Esophagus muscularis mucosa (tissue), 4 donors: ENCODE measurements at regions of chr1 and their contacts with region 1.

Region 1: DNA sequence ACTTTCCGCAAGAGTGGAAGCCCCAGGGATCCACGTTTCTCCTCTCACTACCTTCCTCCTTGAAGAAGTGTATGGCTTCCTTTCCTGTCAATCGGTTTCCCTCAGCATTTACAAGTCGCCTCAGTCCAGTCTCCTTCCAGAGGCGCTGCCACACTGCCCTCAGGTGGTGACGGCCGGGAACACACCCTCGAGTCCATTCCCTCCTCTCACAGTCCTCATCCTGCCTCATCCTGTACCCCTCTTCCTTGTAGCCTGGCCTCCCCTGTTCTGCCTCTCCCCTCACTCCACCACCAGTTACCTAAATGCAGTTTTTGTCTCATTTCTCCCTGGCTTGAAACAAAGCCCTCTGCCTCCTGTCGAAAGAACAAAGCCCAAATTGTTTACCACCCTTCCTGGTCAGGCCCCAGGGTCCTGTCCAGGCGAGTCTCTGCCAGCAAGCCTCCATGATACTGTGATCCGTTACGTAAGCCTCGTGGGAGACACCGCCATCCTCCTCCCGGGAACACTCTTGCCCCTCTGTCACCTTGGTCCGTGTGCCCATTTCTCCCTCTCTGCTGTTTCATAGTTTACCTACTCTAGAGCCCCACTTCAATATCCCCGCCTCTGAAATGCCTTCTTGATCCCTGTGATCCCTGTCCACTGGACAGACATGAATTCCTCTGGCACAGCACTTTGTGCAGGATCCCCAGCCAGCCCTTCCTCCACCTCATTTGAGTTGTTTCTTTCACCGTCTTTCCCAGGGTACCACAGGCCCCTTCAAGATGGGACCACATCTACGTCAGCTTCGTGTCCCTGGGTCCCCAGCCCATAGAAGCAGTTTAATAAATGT is 23.3 kb upstream of the LSM10 start:
- DNase-seq: peak; percentile 97
- H3K4me3 ChIP-seq: no peak overlapping the region
- H3K27ac ChIP-seq: peak overlapping the region in 2 of 4 donors; percentile 9 to 13
- H3K4me1 ChIP-seq: peaks cover 0 to 14% (median 8%) of the 10 kb centered on the region in 4 donors
- H3K27me3 ChIP-seq: no peaks in the 10 kb centered on the region
- CTCF ChIP-seq: peak; percentile 93 to 96 (median 94)
- EP300 ChIP-seq: no peak
- POLR2A ChIP-seq: no peak

Region 2: GRCh38 chr1:36099681-36100341 is 321.2 kb before region 1 on chr1:
- intact Hi-C with region 1: loop called (anchors 2 kb)
- DNase-seq: no peak
- H3K4me3 ChIP-seq: peak overlapping the region in 1 of 4 donors; percentile 7
- H3K27ac ChIP-seq: peak overlapping the region in 1 of 4 donors; percentile 22
- H3K4me1 ChIP-seq: peaks cover 4 to 30% (median 19%) of the 10 kb centered on the region in 4 donors
- H3K27me3 ChIP-seq: no peaks in the 10 kb centered on the region
- CTCF ChIP-seq: peak; percentile 70 to 89 (median 83)
- EP300 ChIP-seq: no peak
- POLR2A ChIP-seq: no peak

Region 3: DNA sequence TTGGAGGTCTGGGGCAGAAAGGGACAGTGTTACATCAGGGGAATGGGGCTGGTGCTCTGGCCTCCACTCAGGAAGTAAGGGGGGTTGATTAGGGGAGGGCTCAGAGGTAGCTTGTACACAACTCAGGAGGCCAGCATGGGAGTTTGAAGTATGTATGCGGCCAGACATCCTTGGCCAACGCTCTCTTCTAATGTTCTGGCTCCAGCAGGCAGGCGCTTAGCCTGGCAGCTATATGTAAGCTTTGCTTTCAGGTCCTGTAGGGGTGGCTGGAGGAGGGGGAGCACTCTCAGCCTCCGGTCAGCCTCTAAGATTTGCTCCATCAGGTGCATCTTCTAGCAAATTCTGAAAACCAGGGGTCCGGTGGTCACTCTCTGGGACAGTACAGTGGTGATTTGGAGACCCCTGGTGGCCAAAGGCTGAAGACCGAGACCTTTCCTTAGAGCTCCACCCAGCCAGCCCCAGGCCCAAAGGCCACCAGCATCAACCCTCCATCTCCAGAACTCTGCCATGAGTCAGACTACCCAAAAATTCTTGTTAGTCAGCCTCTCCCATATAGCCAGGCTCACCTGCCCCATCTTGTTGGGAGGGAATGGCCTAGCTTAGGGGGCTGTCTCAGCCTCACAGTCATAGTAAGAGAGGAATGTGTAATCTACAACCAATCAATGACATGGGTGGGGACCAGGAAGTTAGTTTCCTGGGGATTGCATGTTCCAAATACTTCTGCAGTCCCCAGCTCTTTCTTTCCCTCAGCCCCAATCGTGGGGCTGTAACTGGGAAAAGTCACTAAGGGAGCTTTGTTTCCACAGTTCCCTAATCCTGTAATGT is 286.3 kb before region 1 on chr1:
- intact Hi-C with region 1: loop called (anchors 10 kb)
- DNase-seq: no peak
- H3K4me3 ChIP-seq: no peak overlapping the region
- H3K27ac ChIP-seq: peak overlapping the region; percentile 68 to 83 (median 74)
- H3K4me1 ChIP-seq: peaks cover 33 to 59% (median 52%) of the 10 kb centered on the region in 4 donors
- H3K27me3 ChIP-seq: no peaks in the 10 kb centered on the region
- CTCF ChIP-seq: peak; percentile 67 to 81 (median 77)
- EP300 ChIP-seq: no peak
- POLR2A ChIP-seq: no peak

Region 4: DNA sequence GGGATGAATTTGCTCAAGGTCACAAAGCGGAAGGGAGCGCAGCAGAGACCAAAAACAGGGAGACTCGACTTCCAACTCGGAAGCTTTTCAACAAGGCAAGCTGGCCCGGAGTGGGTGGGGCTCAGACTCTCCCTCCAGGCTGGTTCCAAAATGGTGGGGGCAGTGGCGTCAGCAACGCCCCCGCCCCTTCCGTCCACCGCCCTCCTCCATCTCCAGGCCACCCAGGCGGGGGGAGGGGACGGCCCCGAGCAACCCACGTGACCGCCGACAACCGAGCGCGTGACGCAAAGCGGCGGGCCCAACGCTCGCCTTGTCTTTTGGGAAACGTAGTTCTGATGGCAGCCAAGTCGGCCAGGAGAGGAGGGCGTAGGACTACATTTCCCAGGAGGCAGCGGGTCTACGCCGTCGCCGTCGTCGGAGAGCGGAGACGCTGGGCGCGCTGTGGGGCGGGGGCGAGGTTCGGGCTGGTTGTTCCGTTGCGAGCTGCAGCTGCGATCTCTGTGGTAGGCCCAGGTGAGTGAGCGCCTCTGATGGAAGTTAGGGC is 197.0 kb before region 1 on chr1 and contains the start of gene THRAP3:
- intact Hi-C with region 1: no loop called
- DNase-seq: peak; percentile 100
- H3K4me3 ChIP-seq: peak within 1 kb of the TSS; percentile 81 to 92 (median 86)
- H3K27ac ChIP-seq: peak within 1 kb of the TSS; percentile 96 to 99 (median 98)
- H3K4me1 ChIP-seq: peaks cover 43 to 52% (median 51%) of the 10 kb centered on the region in 4 donors
- H3K27me3 ChIP-seq: no peaks in the 10 kb centered on the region
- CTCF ChIP-seq: peak in 1 of 3 experiments; percentile 4
- EP300 ChIP-seq: peak; percentile 33
- POLR2A ChIP-seq: peak; percentile 99
- total RNA-seq, gene THRAP3: 90.3 to 116 (median 104) TPM

Region 5: GRCh38 chr1:36342481-36343478 is 78.3 kb before region 1 on chr1:
- intact Hi-C with region 1: loop called (anchors 2 kb)
- DNase-seq: no peak
- H3K4me3 ChIP-seq: no peak overlapping the region
- H3K27ac ChIP-seq: peak overlapping the region; percentile 19 to 64 (median 57)
- H3K4me1 ChIP-seq: peaks cover 14 to 24% (median 19%) of the 10 kb centered on the region in 4 donors
- H3K27me3 ChIP-seq: no peaks in the 10 kb centered on the region
- CTCF ChIP-seq: peak; percentile 63 to 66 (median 66)
- EP300 ChIP-seq: no peak
- POLR2A ChIP-seq: no peak

Region 6: DNA sequence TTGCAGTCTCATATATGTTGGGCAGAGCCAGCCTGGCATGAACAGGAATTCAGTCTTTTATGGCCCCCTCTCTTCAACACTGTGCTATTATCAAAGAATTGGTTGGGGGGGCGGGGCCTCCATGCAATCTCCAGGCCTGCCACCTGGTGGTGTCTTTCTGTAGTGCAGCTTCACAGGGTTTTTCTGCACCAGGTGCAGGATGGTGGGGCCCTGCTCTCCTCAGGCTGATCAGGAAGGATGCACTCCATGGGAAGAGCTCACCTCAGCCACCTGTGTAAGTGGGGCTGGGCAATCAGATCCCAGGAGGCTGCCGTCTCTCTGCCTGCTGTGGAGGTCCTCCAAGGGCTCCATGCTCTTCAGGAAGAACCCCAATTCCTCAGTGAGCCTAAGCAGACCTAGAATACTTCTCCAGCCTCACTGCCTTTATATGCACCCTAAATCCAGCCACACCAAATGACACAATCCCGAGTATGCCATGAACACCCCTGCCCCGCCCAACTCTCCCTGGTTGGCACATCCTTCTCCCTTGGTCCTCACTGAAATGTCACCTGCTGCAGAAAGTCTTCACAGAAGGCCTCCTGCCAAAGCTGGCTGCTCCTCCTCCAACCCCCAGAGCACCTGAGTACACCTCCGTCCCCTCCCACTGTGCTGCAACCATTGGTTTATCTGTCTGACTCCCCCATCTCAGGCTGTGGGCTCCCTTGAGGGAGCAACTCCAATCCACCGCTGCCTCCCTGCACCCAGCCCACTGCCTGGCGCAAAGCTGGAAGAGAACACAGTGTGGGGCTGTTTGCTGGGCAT is 51.8 kb before region 1 on chr1:
- intact Hi-C with region 1: loop called (anchors 2 kb)
- DNase-seq: peak; percentile 96
- H3K4me3 ChIP-seq: no peak overlapping the region
- H3K27ac ChIP-seq: no peak overlapping the region
- H3K4me1 ChIP-seq: peaks cover 63 to 80% (median 72%) of the 10 kb centered on the region in 4 donors
- H3K27me3 ChIP-seq: no peaks in the 10 kb centered on the region
- CTCF ChIP-seq: peak; percentile 90 to 97 (median 92)
- EP300 ChIP-seq: no peak
- POLR2A ChIP-seq: no peak